Activated naive CD4-positive, alpha-beta T cell treated with anti-CD3 and anti-CD28 coated beads for 36 hours (primary cell): ENCODE measurements at regions of chr20 and their contacts with region 1.

Region 1: DNA sequence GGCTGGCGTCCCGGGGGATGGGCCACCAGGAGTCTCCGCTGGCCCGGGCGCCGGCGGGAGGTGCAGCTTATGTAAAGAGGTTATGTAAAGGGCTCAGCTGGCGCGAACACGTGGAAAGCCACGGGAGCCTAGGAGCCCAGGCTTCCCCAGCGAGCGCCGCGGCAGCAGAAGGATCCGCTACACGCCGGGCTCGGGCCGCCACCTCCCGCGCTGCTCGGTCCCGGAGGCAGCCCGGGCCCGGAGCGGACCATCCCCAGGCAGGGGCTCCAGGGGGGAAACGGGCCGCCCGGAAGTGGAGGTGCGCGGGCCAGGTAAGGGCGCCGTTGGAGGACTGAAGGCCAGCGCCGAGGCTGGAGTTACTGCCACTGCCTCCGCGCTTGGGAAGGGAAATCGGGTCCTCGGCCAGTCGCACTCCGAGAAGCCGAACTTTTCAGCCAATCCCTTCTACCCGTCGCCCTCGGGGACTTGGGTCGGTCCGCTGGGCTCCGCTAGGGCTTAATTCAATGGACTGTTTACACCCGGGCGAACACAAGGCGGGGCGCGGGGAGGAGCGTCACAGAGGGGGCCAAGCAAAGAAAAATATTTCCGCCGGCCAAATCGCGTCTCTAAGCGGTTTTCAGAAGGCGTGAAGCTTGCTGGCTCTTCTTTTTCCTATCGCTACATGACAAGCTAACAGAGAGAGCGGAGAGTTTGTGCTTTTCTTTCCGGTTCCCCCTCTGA is 398 bp downstream of the STK35 start:
- DNase-seq: peak; percentile 91
- H3K4me3 Mint-ChIP-seq: peak overlapping the region; percentile 91
- H3K27ac Mint-ChIP-seq: peak overlapping the region; percentile 100
- H3K4me1 Mint-ChIP-seq: peaks cover 32% of the 10 kb centered on the region
- H3K27me3 Mint-ChIP-seq: no peaks in the 10 kb centered on the region

Region 2: GRCh38 chr20:543369-544152 is 1558.5 kb before region 1 on chr20 and contains the start of gene CSNK2A1:
- CTCF ChIA-PET with region 1: no interaction called
- intact Hi-C with region 1: loop called (anchors 5 kb)
- DNase-seq: peak; percentile 96
- H3K4me3 Mint-ChIP-seq: peak within 1 kb of the TSS; percentile 81
- H3K27ac Mint-ChIP-seq: peak within 1 kb of the TSS; percentile 97
- H3K4me1 Mint-ChIP-seq: peaks cover 49% of the 10 kb centered on the region
- H3K27me3 Mint-ChIP-seq: peaks cover 2% of the 10 kb centered on the region
- total RNA-seq, gene CSNK2A1: 164 to 167 TPM

Region 3: DNA sequence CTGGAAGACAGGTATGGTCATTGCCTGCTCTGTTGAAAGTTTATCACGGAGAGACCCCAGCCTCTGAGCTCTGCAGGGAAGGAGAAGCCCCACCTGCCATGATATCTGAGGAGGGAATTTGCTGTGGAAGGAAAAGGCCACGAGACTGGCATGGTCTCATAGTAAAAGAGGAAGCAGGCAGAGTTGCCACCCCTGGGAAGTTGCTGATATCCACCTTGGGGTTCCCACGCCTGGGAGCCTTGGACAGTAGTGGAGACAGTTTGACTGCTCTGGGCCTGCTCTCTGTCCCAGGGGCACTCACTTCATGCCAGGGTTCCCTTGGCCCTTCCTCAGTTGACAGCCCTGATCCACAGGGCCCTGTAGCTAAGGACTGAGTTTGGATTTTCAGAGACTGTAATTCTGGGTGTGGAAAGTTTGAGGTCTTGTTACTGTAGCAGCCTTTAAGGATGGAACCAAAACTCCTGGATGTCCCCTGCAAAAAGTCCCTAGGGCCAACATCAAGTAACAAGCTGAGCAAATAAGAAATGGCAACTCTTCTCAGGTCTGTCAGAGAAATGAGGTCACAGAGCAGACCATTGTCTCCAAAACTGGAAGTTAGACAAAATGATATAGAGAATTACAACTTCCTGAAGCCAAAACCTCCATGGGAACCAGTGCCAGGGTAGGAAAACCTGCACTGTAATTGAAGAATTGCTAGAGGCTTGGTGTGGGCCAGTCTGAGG is 475.3 kb before region 1 on chr20:
- CTCF ChIA-PET with region 1: no interaction called
- intact Hi-C with region 1: loop called (anchors 5 kb)
- DNase-seq: peak; percentile 18
- H3K4me3 Mint-ChIP-seq: no peak overlapping the region
- H3K27ac Mint-ChIP-seq: peak overlapping the region; percentile 89
- H3K4me1 Mint-ChIP-seq: peaks cover 94% of the 10 kb centered on the region
- H3K27me3 Mint-ChIP-seq: no peaks in the 10 kb centered on the region

Region 4: GRCh38 chr20:1955217-1955616 is 146.8 kb before region 1 on chr20:
- CTCF ChIA-PET with region 1: no interaction called
- intact Hi-C with region 1: no loop called
- DNase-seq: no peak
- H3K4me3 Mint-ChIP-seq: no peak overlapping the region
- H3K27ac Mint-ChIP-seq: no peak overlapping the region
- H3K4me1 Mint-ChIP-seq: no peaks in the 10 kb centered on the region
- H3K27me3 Mint-ChIP-seq: peaks cover 9% of the 10 kb centered on the region

Region 5: DNA sequence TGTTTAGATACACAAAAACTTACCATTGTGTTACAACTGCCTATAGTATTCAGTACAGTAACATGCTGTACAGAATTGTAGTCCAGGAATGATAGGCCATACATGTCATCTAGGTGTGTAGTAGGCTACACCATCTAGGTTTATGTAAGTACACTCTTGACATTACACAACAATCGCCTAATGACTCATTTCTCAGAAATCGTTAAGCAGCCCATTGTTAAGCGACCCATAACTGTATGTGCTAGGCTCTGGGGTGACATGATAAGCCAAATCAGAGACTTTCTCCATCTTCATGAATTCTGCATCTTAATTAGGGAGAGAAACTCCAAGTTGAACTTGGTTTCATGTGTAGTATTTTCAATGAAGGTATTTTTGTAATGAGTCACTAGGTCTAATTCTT is 16.8 kb after region 1 on chr20:
- CTCF ChIA-PET with region 1: interaction called, 3 read pairs
- intact Hi-C with region 1: loop called (anchors 1 kb)
- DNase-seq: peak; percentile 50
- H3K4me3 Mint-ChIP-seq: peak overlapping the region; percentile 41
- H3K27ac Mint-ChIP-seq: peak overlapping the region; percentile 94
- H3K4me1 Mint-ChIP-seq: peaks cover 86% of the 10 kb centered on the region
- H3K27me3 Mint-ChIP-seq: no peaks in the 10 kb centered on the region

Region 6: GRCh38 chr20:2451939-2452732 is 350.1 kb after region 1 on chr20:
- CTCF ChIA-PET with region 1: no interaction called
- intact Hi-C with region 1: loop called (anchors 5 kb)
- DNase-seq: peak; percentile 85
- H3K4me3 Mint-ChIP-seq: no peak overlapping the region
- H3K27ac Mint-ChIP-seq: no peak overlapping the region
- H3K4me1 Mint-ChIP-seq: peaks cover 37% of the 10 kb centered on the region
- H3K27me3 Mint-ChIP-seq: no peaks in the 10 kb centered on the region

Region 7: DNA sequence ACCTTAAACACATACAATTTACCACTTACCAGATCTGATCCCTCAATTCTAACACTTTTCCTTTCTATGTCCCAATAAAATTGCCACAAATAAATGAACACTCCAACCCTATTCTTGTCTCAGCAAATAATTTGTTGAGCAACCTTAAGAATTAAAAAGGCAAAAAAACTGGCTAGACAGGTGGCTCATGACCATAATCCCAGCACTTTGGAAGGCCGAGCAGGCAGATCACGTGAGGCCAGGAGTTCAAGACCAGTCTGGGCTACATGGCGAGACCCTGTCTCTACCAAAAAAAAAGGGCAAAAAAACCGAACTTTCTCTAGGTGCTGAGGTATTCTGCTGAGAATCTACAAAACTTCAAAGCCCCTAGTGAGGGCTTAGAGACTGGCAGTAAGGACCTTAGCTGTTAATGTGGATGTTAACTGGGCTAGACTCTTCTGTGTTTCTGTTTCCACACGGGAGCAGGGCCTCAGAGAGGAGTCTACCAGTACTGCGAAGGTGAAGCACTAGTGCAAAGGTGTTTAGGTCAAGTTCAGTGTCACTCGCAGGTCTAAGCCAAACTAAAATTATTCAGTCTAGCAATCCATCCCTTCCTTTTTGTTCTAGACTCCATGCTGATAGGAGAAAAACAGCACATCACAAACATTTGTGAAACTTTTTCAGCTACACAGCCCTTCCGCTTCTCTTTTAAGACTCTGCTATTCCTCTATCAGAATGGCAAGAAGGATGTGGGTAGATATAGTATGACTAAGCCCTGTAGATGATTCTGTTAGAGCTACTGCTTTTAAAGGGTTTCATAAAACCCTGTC is 1055.0 kb after region 1 on chr20:
- CTCF ChIA-PET with region 1: no interaction called
- intact Hi-C with region 1: loop called (anchors 2 kb)
- DNase-seq: peak; percentile 42
- H3K4me3 Mint-ChIP-seq: peak overlapping the region; percentile 66
- H3K27ac Mint-ChIP-seq: peak overlapping the region; percentile 91
- H3K4me1 Mint-ChIP-seq: peaks cover 53% of the 10 kb centered on the region
- H3K27me3 Mint-ChIP-seq: no peaks in the 10 kb centered on the region